PC-3 (cell line): ENCODE measurements at regions of chr5 and their contacts with region 1.

Region 1: DNA sequence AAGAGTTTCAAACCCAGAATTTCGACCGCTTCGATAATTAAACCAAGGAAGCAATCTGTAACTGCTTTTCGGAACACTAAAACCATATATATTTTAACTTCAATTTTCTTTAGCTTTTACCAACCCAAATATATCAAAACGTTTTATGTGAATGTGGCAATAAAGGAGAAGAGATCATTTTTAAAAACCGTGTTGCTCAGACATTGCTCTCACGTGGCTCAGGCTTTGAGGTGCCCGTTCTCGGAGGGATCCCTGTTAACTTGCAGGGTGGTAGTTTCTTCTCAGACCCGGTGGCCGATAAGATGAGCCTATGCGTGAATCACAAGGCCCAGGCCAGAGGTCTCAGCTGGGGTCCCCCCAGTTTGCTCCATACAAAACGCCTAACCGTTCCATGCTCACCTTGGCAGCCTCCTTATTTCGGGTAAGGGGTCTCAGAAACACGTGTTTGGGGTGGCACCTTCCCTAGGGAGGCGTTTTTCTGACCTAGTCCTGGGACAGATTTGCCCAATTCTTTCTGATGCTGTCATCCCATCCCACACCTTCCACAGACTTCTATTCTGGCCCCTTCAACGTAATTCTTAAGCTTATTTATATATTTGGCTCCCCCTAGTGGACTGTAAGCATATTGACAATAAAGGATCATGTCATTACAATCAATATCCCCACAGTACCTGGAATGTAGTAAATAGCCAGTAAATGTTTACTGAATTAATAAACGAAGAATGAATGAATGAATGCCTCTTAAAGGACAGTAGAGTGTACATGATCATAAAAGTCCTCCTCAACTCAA is 48.1 kb downstream of the THBS4 start:
- DNase-seq: peak; percentile 76
- ATAC-seq: peak; percentile 87
- H3K4me3 ChIP-seq: peak overlapping the region; percentile 62
- H3K27ac ChIP-seq: no peak overlapping the region
- H3K4me1 ChIP-seq: no peaks in the 10 kb centered on the region; the same call in 1 of the 2 replicates
- H3K27me3 ChIP-seq: no peaks in the 10 kb centered on the region
- CTCF ChIP-seq: peak; percentile 73

Region 2: GRCh38 chr5:79020861-79021561 is 1062.3 kb before region 1 on chr5:
- CTCF ChIA-PET with region 1: interaction called, 8 read pairs
- POLR2A ChIA-PET with region 1: no interaction called
- intact Hi-C with region 1: loop called (anchors 2 kb)
- DNase-seq: peak; percentile 70
- ATAC-seq: peak; percentile 87
- H3K4me3 ChIP-seq: peak overlapping the region; percentile 51
- H3K27ac ChIP-seq: no peak overlapping the region
- H3K4me1 ChIP-seq: no peaks in the 10 kb centered on the region
- H3K27me3 ChIP-seq: no peaks in the 10 kb centered on the region
- CTCF ChIP-seq: peak; percentile 80

Region 3: DNA sequence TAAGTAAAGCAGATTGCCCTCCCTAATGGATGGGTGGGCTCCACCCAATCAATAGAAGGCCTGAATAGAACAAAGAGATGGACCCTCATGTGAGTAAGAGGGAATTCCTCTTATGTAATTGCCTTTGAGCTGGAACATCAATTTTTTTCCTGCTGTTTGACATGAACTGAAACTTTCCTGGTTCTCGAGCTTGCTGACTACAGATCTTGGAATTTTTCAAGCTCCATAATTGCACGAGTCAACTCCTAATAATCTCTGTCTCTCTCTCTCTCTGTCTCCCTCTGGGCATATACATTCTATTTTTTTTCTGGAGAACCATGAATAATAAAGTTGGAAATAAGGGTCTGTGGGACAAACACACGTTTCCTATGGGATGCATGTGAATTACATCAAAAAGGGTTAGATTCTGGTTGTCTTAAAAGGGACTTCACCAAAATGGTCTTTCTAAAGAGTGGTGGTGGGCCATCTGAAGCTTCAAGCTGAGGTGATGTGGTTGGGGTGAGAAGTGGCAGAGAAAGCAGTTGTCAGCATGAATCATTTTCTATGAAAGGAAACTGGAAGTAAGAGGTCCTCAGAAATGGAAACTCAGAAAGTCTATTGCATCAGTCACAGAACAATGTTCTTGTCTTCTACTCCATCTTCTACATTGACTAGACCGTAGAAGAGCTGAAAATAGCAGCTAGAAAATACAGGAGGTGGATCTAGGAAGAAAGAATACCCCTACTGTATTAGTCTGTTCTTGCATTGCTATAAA is 522.3 kb before region 1 on chr5:
- CTCF ChIA-PET with region 1: no interaction called
- POLR2A ChIA-PET with region 1: no interaction called
- intact Hi-C with region 1: loop called (anchors 5 kb)
- DNase-seq: no peak
- ATAC-seq: no peak
- H3K4me3 ChIP-seq: no peak overlapping the region
- H3K27ac ChIP-seq: no peak overlapping the region
- H3K4me1 ChIP-seq: peaks cover 8% of the 10 kb centered on the region
- H3K27me3 ChIP-seq: no peaks in the 10 kb centered on the region
- CTCF ChIP-seq: no peak

Region 4: GRCh38 chr5:79857714-79858409 is 225.4 kb before region 1 on chr5:
- CTCF ChIA-PET with region 1: interaction called, 3 read pairs
- POLR2A ChIA-PET with region 1: no interaction called
- intact Hi-C with region 1: loop called (anchors 1 kb)
- DNase-seq: peak; percentile 77
- ATAC-seq: no peak; the same call in 1 of the 2 replicates
- H3K4me3 ChIP-seq: no peak overlapping the region
- H3K27ac ChIP-seq: no peak overlapping the region
- H3K4me1 ChIP-seq: peaks cover 4% of the 10 kb centered on the region; the same call in 1 of the 2 replicates
- H3K27me3 ChIP-seq: no peaks in the 10 kb centered on the region
- CTCF ChIP-seq: peak; percentile 91

Region 5: DNA sequence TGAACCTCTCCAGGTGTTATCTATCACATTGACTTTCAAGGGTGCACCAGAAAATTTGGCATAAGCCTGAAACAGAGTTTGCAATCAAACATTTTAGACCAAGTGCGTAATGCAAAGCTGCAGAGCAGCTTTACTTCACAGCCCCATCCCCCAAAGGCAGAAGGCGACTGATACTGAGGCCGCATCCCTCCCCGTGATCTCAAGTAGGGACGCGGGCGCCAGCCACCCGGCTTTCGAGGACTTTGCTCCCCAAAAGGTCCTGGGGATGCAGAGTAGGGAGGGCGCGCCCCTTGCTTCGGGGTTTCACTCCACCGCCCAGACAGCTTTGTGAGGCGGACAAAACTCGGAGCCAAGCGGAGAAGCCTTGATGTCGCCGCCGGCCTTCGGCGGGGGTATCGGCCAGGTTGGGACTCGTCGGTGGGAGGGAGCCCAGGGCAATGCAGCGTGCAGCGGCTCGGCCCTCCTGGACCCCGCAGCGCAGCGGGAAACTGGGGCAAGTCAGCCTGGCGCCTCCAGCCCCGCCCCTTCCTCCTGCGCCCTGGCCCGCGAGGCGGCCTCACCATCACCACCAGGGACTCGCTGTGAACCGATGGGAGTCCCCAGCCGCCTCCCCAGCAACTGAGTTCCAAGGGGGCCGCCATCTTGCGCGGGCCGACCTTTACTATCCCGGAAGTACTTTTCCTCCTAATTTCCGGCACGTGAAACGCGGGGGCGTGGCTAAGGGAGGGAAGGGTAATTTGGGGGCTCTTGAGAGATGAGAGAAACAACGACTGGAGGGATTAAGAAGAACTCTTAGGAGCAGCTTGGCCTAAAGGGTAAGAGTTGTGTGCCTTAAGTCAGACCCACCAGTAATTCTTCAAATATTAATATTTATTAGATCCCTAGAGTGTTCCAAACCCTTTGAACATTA is 92.4 kb before region 1 on chr5 and contains the start of gene MTX3:
- CTCF ChIA-PET with region 1: interaction called, 3 read pairs
- POLR2A ChIA-PET with region 1: no interaction called
- intact Hi-C with region 1: loop called (anchors 1 kb)
- DNase-seq: peak; percentile 76
- ATAC-seq: peak; percentile 90
- H3K4me3 ChIP-seq: peak within 1 kb of the TSS; percentile 100
- H3K27ac ChIP-seq: peak within 1 kb of the TSS; percentile 68
- H3K4me1 ChIP-seq: peaks cover 16% of the 10 kb centered on the region
- H3K27me3 ChIP-seq: no peaks in the 10 kb centered on the region
- CTCF ChIP-seq: no peak
- total RNA-seq, gene MTX3: 7.0 and 7.1 TPM in 2 replicates

Region 6: GRCh38 chr5:80093796-80094195 is 10.5 kb after region 1 on chr5:
- CTCF ChIA-PET with region 1: interaction called, 13 read pairs
- POLR2A ChIA-PET with region 1: no interaction called
- intact Hi-C with region 1: no loop called
- DNase-seq: no peak
- ATAC-seq: no peak
- H3K4me3 ChIP-seq: no peak overlapping the region
- H3K27ac ChIP-seq: no peak overlapping the region
- H3K4me1 ChIP-seq: no peaks in the 10 kb centered on the region
- H3K27me3 ChIP-seq: no peaks in the 10 kb centered on the region
- CTCF ChIP-seq: no peak

Region 7: GRCh38 chr5:80181618-80182211 is 98.4 kb after region 1 on chr5:
- CTCF ChIA-PET with region 1: no interaction called
- POLR2A ChIA-PET with region 1: no interaction called
- intact Hi-C with region 1: no loop called
- DNase-seq: peak; percentile 85
- ATAC-seq: peak; percentile 42
- H3K4me3 ChIP-seq: no peak overlapping the region
- H3K27ac ChIP-seq: peak overlapping the region; percentile 61
- H3K4me1 ChIP-seq: peaks cover 45% of the 10 kb centered on the region
- H3K27me3 ChIP-seq: no peaks in the 10 kb centered on the region
- CTCF ChIP-seq: no peak

Region 8: GRCh38 chr5:80191991-80192398 is 108.7 kb after region 1 on chr5:
- CTCF ChIA-PET with region 1: no interaction called
- POLR2A ChIA-PET with region 1: no interaction called
- intact Hi-C with region 1: no loop called
- DNase-seq: no peak
- ATAC-seq: no peak
- H3K4me3 ChIP-seq: no peak overlapping the region
- H3K27ac ChIP-seq: no peak overlapping the region
- H3K4me1 ChIP-seq: peaks cover 5% of the 10 kb centered on the region
- H3K27me3 ChIP-seq: no peaks in the 10 kb centered on the region
- CTCF ChIP-seq: no peak